ENCODE measurements at regions of chr10 and their contacts with region 1.

Region 1: DNA sequence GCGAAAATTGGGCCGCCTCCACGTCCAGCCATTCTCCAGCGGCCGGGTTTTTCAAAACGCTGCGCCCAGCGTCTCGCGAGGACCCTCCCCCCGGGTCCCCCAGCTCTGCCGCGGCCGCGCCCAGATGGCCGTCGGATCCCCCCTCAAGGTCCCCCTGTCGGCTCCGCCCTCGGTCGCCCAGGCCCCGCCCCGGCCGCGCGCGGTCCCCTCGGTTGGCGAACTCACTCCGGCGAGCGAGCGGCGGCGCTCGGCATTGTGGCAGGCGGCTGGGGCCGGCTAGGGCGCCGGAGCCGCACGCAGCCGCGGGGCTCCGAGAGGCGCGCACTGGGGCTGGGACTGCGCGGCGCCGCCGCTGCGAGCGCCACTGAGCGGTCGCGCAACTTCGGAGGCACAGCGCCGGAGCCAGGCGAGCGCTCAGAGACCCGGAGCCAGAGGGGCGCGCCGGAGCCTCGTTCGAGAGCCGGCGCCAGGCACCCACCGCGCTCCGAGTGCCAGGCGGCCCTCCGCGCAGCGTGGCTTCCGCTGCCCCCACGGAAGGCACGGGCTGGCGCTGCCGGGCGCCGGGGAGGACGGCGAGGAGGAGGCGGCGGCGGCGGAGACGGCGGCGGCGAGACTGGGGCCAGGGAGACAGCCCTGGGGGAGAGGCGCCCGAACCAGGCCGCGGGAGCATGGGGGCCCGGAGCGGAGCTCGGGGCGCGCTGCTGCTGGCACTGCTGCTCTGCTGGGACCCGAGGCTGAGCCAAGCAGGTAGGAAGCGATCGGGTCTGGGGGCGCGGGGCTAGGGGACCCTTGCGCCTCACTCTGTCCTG is at the start of gene UNC5B:
- DNase-seq: peak; percentile 97
- H3K4me3 ChIP-seq: peak within 1 kb of the TSS; percentile 90 to 98
- H3K27ac ChIP-seq: peak within 1 kb of the TSS; percentile 90 to 91
- H3K4me1 ChIP-seq: peaks cover 17 to 57% of the 10 kb centered on the region in 2 experiments; a peak in 2 of 4 replicates
- H3K27me3 ChIP-seq: peaks cover 7% of the 10 kb centered on the region; the same call in 1 of the 2 replicates
- CTCF ChIP-seq: no peak; the same call in 1 of the 2 replicates
- EP300 ChIP-seq: 0 out of 4 replicates have a peak, but pooled peaks of 1 of the 2 experiments have one; percentile 23
- RAD21 ChIP-seq: peak; percentile 12
- polyA plus RNA-seq, gene UNC5B: 12.2 and 13.8 TPM in 2 replicates

Region 2: GRCh38 chr10:71222601-71223346 is 10.3 kb after region 1 on chr10:
- CTCF ChIA-PET with region 1: interaction called, 10 read pairs
- POLR2A ChIA-PET with region 1: interaction called, 10 read pairs
- DNase-seq: no peak
- H3K4me3 ChIP-seq: no peak overlapping the region; a peak in 1 of 4 replicates
- H3K27ac ChIP-seq: peak overlapping the region; percentile 29 to 98
- H3K4me1 ChIP-seq: peaks cover 44 to 75% of the 10 kb centered on the region in 2 experiments
- H3K27me3 ChIP-seq: no peaks in the 10 kb centered on the region
- CTCF ChIP-seq: peak; percentile 27; the same call in 1 of the 2 replicates
- EP300 ChIP-seq: 0 out of 4 replicates have a peak, but pooled peaks of 1 of the 2 experiments have one; percentile 24
- RAD21 ChIP-seq: no peak

Region 3: DNA sequence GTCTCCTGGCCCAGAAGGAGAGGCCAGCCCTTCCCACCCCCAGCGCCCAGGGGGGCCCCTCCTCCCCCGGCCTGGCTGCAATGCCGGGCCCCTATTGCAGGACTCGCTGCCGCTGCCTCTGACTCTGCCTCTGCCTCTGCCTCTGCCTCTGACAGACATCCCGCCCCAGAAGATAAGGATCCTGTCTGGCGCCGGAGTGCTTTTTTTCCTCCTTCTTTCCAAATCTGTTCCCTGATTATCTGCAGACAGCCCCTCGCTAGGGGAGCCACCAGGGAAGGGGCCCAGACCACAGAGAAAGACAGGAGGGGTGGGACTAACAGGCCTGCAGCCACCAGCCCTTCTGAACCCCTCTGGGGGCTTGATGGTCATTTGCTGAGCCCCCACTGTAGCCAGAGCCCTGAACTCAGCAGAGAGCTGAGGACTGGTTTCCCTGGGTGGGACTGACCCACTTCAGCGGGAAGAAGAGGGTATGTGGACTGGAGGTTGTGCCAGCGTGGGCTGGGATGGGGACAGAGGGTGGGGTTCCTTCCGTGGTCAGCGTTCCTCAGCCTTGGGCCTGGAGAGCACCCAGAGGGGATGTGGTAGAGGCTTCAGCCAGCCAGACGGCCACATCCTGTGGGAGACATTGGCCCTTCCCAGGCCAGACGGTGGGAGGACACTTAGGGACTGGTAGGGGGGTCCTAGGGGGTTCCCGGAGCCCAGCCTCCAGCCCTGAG is 22.6 kb after region 1 on chr10:
- CTCF ChIA-PET with region 1: interaction called, 7 read pairs
- POLR2A ChIA-PET with region 1: interaction called, 65 read pairs
- DNase-seq: peak; percentile 83
- H3K4me3 ChIP-seq: peak overlapping the region; percentile 6 to 46; a peak in 3 of 4 replicates
- H3K27ac ChIP-seq: peak overlapping the region; percentile 94 to 100
- H3K4me1 ChIP-seq: peaks cover 82 to 97% of the 10 kb centered on the region in 2 experiments
- H3K27me3 ChIP-seq: no peaks in the 10 kb centered on the region
- CTCF ChIP-seq: no peak
- EP300 ChIP-seq: peak; percentile 84 to 98
- RAD21 ChIP-seq: peak; percentile 38; the same call in 1 of the 2 replicates

Region 4: DNA sequence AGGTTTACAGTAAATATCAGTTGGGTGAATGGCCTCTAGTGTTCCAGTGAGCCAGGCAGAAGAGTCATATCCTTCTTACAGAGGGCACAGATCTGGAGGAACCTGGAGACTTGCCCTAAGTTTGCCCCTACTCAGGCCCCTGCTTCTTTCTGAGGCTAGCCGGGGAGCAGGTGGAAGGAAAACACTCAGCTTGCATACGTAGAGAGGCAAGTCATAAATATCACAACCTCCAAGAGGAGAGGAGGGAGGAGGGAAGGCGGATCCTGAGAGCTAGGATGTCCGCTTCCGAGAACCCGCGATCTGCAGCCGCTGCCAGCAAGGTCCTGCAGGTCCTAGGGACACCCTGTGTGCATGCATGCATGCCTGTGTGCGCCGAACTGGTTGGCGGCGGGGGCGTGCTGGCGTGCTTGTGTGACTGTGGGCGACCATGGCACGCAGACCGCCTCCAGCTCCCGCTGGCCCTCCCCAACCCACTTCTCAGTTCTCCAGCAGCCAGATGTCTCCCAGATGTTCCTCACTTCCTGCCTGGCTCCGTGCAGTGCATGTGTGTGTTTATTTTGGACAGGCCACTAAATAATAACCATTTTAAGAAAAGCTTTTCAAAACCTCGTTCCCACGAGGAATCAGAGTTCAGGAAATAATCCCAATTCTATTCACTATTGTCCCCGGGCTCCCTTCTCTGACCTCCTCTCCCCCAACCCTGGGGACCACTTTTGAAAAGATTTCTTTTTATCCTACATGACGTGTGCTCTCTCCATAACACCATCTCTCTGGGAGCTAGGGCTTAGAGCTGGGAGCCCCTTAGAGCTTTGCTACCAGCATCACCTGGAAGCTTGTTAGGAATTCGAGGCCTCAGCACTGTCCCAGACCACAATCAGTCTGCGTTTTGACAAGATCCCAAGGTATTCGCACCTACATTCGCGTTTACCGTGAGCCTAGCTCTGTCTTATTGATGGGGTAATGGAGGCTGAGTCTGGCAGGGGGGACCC is 32.2 kb after region 1 on chr10:
- CTCF ChIA-PET with region 1: interaction called, 13 read pairs
- POLR2A ChIA-PET with region 1: interaction called, 35 read pairs
- DNase-seq: peak; percentile 81
- H3K4me3 ChIP-seq: no peak overlapping the region; a peak in 2 of 4 replicates
- H3K27ac ChIP-seq: peak overlapping the region; percentile 60 to 100; a peak in 3 of 4 replicates
- H3K4me1 ChIP-seq: peaks cover 60 to 99% of the 10 kb centered on the region in 2 experiments
- H3K27me3 ChIP-seq: no peaks in the 10 kb centered on the region
- CTCF ChIP-seq: no peak
- EP300 ChIP-seq: peak; percentile 7 to 50; a peak in 2 of 4 replicates
- RAD21 ChIP-seq: no peak; the same call in 1 of the 2 replicates

Region 5: GRCh38 chr10:71255808-71256660 is 43.5 kb after region 1 on chr10:
- CTCF ChIA-PET with region 1: interaction called, 13 read pairs
- POLR2A ChIA-PET with region 1: interaction called, 11 read pairs
- DNase-seq: peak; percentile 74
- H3K4me3 ChIP-seq: no peak overlapping the region
- H3K27ac ChIP-seq: peak overlapping the region; percentile 53 to 100
- H3K4me1 ChIP-seq: peaks cover 56 to 97% of the 10 kb centered on the region in 2 experiments
- H3K27me3 ChIP-seq: no peaks in the 10 kb centered on the region
- CTCF ChIP-seq: no peak
- EP300 ChIP-seq: peak in 1 of 2 experiments; percentile 81; a peak in 3 of 4 replicates
- RAD21 ChIP-seq: 0 out of 2 replicates have a peak, but pooled peaks have one; percentile 20

Region 6: GRCh38 chr10:71278691-71279588 is 66.4 kb after region 1 on chr10:
- CTCF ChIA-PET with region 1: interaction called, 18 read pairs
- POLR2A ChIA-PET with region 1: interaction called, 15 read pairs
- DNase-seq: peak; percentile 90
- H3K4me3 ChIP-seq: no peak overlapping the region; a peak in 1 of 4 replicates
- H3K27ac ChIP-seq: peak overlapping the region in 1 of 2 experiments; percentile 99; a peak in 2 of 4 replicates
- H3K4me1 ChIP-seq: peaks cover 0 to 67% of the 10 kb centered on the region in 2 experiments; a peak in 3 of 4 replicates
- H3K27me3 ChIP-seq: no peaks in the 10 kb centered on the region
- CTCF ChIP-seq: no peak
- EP300 ChIP-seq: peak in 1 of 2 experiments; percentile 91; a peak in 2 of 4 replicates
- RAD21 ChIP-seq: peak; percentile 23; the same call in 1 of the 2 replicates

Region 7: GRCh38 chr10:71285180-71285545 is 72.6 kb after region 1 on chr10:
- CTCF ChIA-PET with region 1: interaction called, 18 read pairs
- POLR2A ChIA-PET with region 1: interaction called, 3 read pairs
- DNase-seq: peak; percentile 85
- H3K4me3 ChIP-seq: no peak overlapping the region
- H3K27ac ChIP-seq: no peak overlapping the region; a peak in 1 of 4 replicates
- H3K4me1 ChIP-seq: peaks cover 0 to 22% of the 10 kb centered on the region in 2 experiments; a peak in 2 of 4 replicates
- H3K27me3 ChIP-seq: no peaks in the 10 kb centered on the region
- CTCF ChIP-seq: peak; percentile 76
- EP300 ChIP-seq: no peak
- RAD21 ChIP-seq: peak; percentile 83

Region 8: DNA sequence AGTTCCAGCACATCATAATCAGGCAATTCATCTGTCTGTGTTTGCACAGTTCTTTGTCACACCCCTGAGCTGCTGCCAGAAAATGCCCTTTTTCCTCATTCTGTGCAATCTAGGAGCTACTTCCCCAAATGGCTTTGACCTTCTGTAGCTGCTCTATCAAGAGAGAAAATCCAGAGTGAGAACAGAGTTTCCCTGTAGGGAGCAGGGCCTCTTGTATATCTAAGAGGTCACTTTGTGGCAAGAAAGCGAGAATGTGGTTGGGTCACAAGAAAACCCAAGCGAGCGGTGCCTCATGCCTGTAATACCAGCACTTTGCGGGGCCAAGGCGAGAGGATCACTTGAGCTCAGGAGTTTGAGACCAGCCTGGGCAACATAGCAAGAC is 130.9 kb after region 1 on chr10:
- CTCF ChIA-PET with region 1: no interaction called
- POLR2A ChIA-PET with region 1: no interaction called
- DNase-seq: no peak
- H3K4me3 ChIP-seq: no peak overlapping the region
- H3K27ac ChIP-seq: no peak overlapping the region
- H3K4me1 ChIP-seq: peaks cover 0 to 25% of the 10 kb centered on the region in 2 experiments; a peak in 1 of 4 replicates
- H3K27me3 ChIP-seq: no peaks in the 10 kb centered on the region
- CTCF ChIP-seq: no peak
- EP300 ChIP-seq: no peak
- RAD21 ChIP-seq: no peak